PC-9 (cell line): ENCODE measurements at regions of chr3 and their contacts with region 1.

Region 1: DNA sequence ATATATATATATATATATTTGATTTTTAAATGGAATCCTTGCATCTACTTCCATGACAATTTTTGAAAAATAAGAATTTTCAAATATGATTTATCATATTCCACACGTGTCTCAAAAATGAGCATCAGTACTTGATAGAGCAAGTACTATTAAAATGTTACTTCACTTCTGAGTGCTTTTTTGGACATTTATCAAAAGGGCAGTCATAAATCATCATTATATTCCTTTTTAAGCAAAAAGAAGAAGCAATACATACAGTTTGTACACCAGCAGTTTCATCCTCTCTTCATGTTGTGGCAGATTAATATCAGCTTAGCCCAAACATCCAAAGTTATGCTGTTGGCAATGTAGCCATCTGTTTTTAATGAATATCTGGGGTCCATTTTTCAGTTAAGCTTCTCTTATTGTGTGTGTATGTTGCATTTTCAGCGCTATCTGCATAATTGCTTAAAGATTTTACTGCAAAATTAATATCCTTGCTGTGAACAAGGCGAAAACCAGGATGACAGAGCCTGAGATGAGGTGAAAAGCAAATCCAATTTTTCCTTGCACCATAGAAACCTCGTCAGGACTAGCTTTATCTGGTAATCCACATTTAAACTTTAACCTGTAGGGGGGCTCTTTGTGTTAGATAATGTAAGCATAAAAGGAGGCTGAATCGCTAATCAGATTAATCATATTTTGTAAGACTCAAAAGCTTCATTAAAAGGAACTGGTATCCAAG is 604.9 kb upstream of the AGTR1 start:
- DNase-seq: no peak
- H3K4me3 ChIP-seq: no peak overlapping the region
- H3K27ac ChIP-seq: no peak overlapping the region
- H3K4me1 ChIP-seq: no peaks in the 10 kb centered on the region
- H3K27me3 ChIP-seq: no peaks in the 10 kb centered on the region
- CTCF ChIP-seq: no peak

Region 2: GRCh38 chr3:148459931-148460513 is 367.2 kb after region 1 on chr3:
- CTCF ChIA-PET with region 1: no interaction called
- POLR2A ChIA-PET with region 1: no interaction called
- intact Hi-C with region 1: loop called (anchors 10 kb)
- DNase-seq: no peak
- H3K4me3 ChIP-seq: no peak overlapping the region
- H3K27ac ChIP-seq: no peak overlapping the region
- H3K4me1 ChIP-seq: no peaks in the 10 kb centered on the region
- H3K27me3 ChIP-seq: no peaks in the 10 kb centered on the region
- CTCF ChIP-seq: peak; percentile 63